Naive thymus-derived CD4-positive, alpha-beta T cell (primary cell): ENCODE measurements at regions of chr9 and their contacts with region 1.

Region 1: GRCh38 chr9:36873247-36873875 is 160.7 kb downstream of the PAX5 start:
- DNase-seq: peak; percentile 37 to 71 (median 63)
- ATAC-seq: peak; percentile 78
- H3K4me3 ChIP-seq: no peak overlapping the region
- H3K4me3 Mint-ChIP-seq: no peak overlapping the region
- H3K27ac ChIP-seq: no peak overlapping the region
- H3K27ac Mint-ChIP-seq: peak overlapping the region in 1 of 9 donors; percentile 25
- H3K4me1 ChIP-seq: no peaks in the 10 kb centered on the region
- H3K4me1 Mint-ChIP-seq: no peaks in the 10 kb centered on the region
- H3K27me3 ChIP-seq: no peaks in the 10 kb centered on the region
- H3K27me3 Mint-ChIP-seq: peaks cover 0 to 4% (median 0%) of the 10 kb centered on the region in 5 donors

Region 2: GRCh38 chr9:36765468-36766341 is 107.7 kb before region 1 on chr9:
- CTCF ChIA-PET with region 1: no interaction called
- POLR2A ChIA-PET with region 1: no interaction called
- intact Hi-C with region 1: no loop called
- DNase-seq: peak; percentile 81 to 96 (median 91)
- ATAC-seq: peak; percentile 100
- H3K4me3 ChIP-seq: peak overlapping the region; percentile 56
- H3K4me3 Mint-ChIP-seq: no peak overlapping the region
- H3K27ac ChIP-seq: peak overlapping the region; percentile 56
- H3K27ac Mint-ChIP-seq: no peak overlapping the region
- H3K4me1 ChIP-seq: no peaks in the 10 kb centered on the region
- H3K4me1 Mint-ChIP-seq: peaks cover 0 to 6% (median 2%) of the 10 kb centered on the region in 7 donors
- H3K27me3 ChIP-seq: no peaks in the 10 kb centered on the region
- H3K27me3 Mint-ChIP-seq: peaks cover 0 to 16% (median 11%) of the 10 kb centered on the region in 5 donors

Region 3: GRCh38 chr9:36818965-36819870 is 54.1 kb before region 1 on chr9:
- CTCF ChIA-PET with region 1: no interaction called
- POLR2A ChIA-PET with region 1: no interaction called
- intact Hi-C with region 1: no loop called
- DNase-seq: no peak
- ATAC-seq: no peak
- H3K4me3 ChIP-seq: no peak overlapping the region
- H3K4me3 Mint-ChIP-seq: peak overlapping the region in 1 of 10 donors; percentile 60
- H3K27ac ChIP-seq: no peak overlapping the region
- H3K27ac Mint-ChIP-seq: no peak overlapping the region
- H3K4me1 ChIP-seq: no peaks in the 10 kb centered on the region
- H3K4me1 Mint-ChIP-seq: peaks cover 0 to 9% (median 5%) of the 10 kb centered on the region in 7 donors
- H3K27me3 ChIP-seq: no peaks in the 10 kb centered on the region
- H3K27me3 Mint-ChIP-seq: peaks cover 23 to 50% (median 47%) of the 10 kb centered on the region in 5 donors

Region 4: GRCh38 chr9:36924071-36924470 is 50.7 kb after region 1 on chr9:
- CTCF ChIA-PET with region 1: no interaction called
- POLR2A ChIA-PET with region 1: no interaction called
- intact Hi-C with region 1: loop called in 1 of 2 experiments (anchors 2 kb)
- DNase-seq: no peak
- ATAC-seq: no peak
- H3K4me3 ChIP-seq: no peak overlapping the region
- H3K4me3 Mint-ChIP-seq: peak overlapping the region in 1 of 10 donors; percentile 20
- H3K27ac ChIP-seq: no peak overlapping the region
- H3K27ac Mint-ChIP-seq: peak overlapping the region in 1 of 9 donors; percentile 39
- H3K4me1 ChIP-seq: no peaks in the 10 kb centered on the region
- H3K4me1 Mint-ChIP-seq: peaks cover 0 to 41% (median 0%) of the 10 kb centered on the region in 7 donors
- H3K27me3 ChIP-seq: no peaks in the 10 kb centered on the region
- H3K27me3 Mint-ChIP-seq: peaks cover 0 to 26% (median 14%) of the 10 kb centered on the region in 5 donors

Region 5: DNA sequence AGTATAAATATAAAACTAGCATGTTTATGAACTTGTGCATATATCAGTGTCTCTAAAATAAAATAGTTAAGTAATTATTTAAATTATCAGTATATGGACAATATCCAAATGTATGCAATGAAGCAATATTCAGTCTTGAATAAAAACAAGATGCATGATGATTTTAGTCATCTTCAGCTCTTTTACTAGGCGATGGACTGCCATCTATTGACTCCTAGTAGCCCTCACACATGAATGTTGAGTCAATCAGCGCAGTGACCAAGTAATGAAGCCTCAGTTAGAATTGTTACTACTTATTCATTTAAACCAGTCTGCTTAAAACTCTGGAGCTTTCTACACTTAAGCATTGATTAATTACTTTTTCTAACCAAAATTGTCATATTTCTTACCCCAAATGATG is 456.2 kb after region 1 on chr9:
- CTCF ChIA-PET with region 1: interaction called, 4 read pairs
- POLR2A ChIA-PET with region 1: no interaction called
- intact Hi-C with region 1: loop called in 1 of 2 experiments (anchors 1 kb)
- DNase-seq: peak in 4 of 9 donors; percentile 3 to 16 (median 10)
- ATAC-seq: peak; percentile 27
- H3K4me3 ChIP-seq: no peak overlapping the region
- H3K4me3 Mint-ChIP-seq: no peak overlapping the region
- H3K27ac ChIP-seq: no peak overlapping the region
- H3K27ac Mint-ChIP-seq: no peak overlapping the region
- H3K4me1 ChIP-seq: no peaks in the 10 kb centered on the region
- H3K4me1 Mint-ChIP-seq: peaks cover 0 to 4% (median 0%) of the 10 kb centered on the region in 7 donors
- H3K27me3 ChIP-seq: no peaks in the 10 kb centered on the region
- H3K27me3 Mint-ChIP-seq: no peaks in the 10 kb centered on the region

Region 6: DNA sequence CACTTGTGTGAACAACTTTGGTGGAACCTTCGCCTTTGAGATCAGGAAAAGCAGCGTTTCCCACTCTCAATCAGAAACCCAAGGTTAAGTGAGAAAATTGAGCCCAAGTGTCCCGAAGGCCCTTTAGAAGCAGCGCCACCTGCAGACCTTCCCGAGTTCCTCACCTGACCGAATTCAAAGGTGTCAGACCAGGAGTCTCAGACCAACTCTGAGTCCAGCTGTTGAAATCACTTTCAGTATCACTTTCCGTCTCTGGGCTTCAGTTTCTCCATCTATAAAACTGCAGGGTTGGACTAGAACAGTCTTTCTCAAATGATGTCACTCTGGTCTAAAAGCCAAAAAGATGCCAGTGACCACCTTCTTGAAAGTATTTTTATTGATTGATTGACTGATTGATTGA is 517.4 kb after region 1 on chr9:
- CTCF ChIA-PET with region 1: interaction called, 6 read pairs
- POLR2A ChIA-PET with region 1: no interaction called
- intact Hi-C with region 1: loop called in 1 of 2 experiments (anchors 2 kb)
- DNase-seq: peak in 1 of 9 donors; percentile 19
- ATAC-seq: peak; percentile 24
- H3K4me3 ChIP-seq: no peak overlapping the region
- H3K4me3 Mint-ChIP-seq: no peak overlapping the region
- H3K27ac ChIP-seq: no peak overlapping the region
- H3K27ac Mint-ChIP-seq: no peak overlapping the region
- H3K4me1 ChIP-seq: no peaks in the 10 kb centered on the region
- H3K4me1 Mint-ChIP-seq: no peaks in the 10 kb centered on the region
- H3K27me3 ChIP-seq: no peaks in the 10 kb centered on the region
- H3K27me3 Mint-ChIP-seq: no peaks in the 10 kb centered on the region